Right ventricle myocardium superior (tissue), 1 donor: ENCODE measurements at regions of chr12 and their contacts with region 1.

Region 1: DNA sequence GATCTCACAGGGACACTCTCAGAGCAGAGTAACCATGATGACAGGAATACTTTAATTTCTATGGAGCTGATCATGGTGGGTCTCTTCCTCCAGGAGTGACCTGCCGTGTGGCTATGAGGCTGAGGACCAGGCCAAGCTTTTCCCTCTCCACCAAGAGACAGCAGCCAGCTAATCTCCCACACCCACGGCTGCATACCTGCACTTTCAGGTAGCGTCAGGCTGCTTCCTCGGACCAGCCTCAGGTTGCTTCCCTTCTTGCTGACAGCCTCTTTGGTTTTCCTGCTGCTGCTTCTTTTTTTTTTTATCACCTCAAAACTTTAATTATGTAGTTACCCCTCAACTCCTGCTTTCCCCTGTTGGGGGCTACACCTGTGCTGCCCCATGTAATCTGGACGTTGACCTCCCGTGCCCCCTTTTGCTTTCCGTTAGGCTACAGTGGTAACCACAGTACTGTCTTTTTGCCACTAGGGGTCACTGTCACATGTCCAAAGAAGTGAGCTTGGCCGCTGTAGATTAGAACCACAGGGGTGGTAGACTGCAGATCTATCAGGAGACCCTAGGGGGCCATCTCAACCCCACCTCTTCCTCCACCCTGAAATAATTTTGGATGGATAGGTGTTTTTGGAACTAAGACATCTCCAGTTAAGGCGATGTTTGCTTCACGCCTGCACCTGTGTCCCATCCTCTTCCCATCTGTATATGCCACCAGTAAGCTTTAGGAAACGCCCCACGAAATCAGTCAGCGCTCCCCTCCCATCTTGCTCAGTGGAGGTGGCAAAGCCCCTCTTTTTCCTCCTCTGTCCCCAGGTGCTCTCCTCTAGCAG is 7.8 kb upstream of the PIP4K2C start:
- DNase-seq: no peak
- ATAC-seq: peak; percentile 97

Region 2: DNA sequence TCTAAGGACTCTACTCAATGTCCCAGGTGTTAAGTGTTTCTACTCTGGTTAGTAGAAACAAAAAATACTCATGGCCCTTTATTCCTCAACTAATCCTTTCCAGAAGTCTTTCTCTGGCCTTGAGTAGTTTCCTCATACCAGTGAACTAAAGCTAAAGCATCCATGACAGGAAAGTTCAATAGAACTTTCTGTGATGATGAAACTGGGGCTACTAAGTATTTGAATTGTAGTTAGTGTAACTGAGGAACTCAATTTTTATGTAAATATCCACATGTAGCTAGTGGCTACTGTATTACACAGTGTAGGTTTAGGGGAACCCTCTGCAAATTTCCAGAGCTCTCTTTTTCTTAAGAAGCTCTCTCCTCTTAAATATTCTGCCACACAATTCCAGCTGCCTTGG is 216.1 kb before region 1 on chr12:
- intact Hi-C with region 1: no loop called
- DNase-seq: no peak
- ATAC-seq: no peak

Region 3: GRCh38 chr12:57511588-57512325 is 71.5 kb before region 1 on chr12:
- intact Hi-C with region 1: no loop called
- DNase-seq: no peak
- ATAC-seq: no peak

Region 4: GRCh38 chr12:57522887-57523705 is 60.1 kb before region 1 on chr12:
- intact Hi-C with region 1: no loop called
- DNase-seq: peak; percentile 76
- ATAC-seq: no peak

Region 5: DNA sequence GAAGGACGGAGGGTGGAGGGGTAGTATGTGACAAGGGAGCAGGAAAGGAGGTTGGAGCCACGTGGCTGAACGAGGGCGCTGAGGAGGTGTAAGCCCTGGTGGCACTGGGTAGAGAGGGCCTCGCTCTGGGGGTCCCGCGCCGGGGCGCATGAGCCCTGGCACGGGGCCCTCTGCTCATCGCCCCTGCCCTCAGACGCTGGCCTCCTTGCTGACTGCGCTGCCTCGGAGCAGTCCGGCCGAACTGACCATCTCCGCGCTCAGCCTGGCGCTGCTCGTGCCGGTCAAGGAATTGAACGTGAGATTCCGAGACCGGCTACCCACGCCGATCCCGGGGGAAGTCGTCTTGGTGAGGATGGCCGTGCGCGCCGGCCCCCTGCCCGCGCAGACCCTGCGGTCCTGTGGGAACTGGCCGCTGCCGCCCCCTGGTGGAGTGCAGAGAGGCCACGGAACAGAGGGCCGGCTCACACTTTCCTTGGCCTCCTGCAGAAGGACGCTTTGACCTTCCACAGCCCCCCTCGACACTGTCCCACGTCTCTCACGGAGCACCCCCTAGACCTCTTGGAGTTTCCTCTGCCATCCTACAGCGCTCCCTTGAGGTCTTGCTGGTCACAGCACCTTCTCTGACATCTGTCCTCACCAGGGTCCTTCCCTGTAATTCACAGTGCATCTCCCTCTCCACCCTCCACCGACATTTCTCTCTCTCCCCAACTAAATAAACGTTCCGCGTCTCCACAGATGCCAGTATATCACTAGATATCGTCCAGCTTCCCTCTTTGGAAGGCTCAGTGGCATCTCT is 38.5 kb after region 1 on chr12:
- intact Hi-C with region 1: loop called (anchors 2 kb)
- DNase-seq: peak; percentile 80
- ATAC-seq: peak; percentile 84

Region 6: GRCh38 chr12:57657744-57658143 is 74.5 kb after region 1 on chr12:
- intact Hi-C with region 1: no loop called
- DNase-seq: no peak
- ATAC-seq: peak; percentile 43

Region 7: DNA sequence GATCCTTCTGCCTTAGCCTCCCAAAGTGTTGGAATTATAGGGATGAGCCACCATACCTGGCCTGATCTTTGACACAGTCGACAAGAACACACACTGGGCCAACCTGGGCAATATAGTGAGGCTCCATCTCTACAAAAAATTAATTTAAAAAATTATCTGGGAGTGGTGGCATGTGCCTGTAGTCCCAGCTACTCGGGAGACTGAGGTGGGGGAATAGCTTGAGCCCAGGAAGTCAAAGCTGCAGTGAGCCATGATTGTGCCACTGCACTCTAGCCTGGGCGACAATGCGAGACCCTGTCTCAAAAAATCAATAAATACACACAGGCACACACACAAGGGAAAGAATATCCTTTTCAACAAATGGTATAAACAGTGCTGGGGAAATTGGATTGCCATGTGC is 104.6 kb after region 1 on chr12:
- intact Hi-C with region 1: loop called (anchors 5 kb)
- DNase-seq: no peak
- ATAC-seq: no peak